BJ (cell line): ENCODE measurements at regions of chr6 and their contacts with region 1.

Region 1: DNA sequence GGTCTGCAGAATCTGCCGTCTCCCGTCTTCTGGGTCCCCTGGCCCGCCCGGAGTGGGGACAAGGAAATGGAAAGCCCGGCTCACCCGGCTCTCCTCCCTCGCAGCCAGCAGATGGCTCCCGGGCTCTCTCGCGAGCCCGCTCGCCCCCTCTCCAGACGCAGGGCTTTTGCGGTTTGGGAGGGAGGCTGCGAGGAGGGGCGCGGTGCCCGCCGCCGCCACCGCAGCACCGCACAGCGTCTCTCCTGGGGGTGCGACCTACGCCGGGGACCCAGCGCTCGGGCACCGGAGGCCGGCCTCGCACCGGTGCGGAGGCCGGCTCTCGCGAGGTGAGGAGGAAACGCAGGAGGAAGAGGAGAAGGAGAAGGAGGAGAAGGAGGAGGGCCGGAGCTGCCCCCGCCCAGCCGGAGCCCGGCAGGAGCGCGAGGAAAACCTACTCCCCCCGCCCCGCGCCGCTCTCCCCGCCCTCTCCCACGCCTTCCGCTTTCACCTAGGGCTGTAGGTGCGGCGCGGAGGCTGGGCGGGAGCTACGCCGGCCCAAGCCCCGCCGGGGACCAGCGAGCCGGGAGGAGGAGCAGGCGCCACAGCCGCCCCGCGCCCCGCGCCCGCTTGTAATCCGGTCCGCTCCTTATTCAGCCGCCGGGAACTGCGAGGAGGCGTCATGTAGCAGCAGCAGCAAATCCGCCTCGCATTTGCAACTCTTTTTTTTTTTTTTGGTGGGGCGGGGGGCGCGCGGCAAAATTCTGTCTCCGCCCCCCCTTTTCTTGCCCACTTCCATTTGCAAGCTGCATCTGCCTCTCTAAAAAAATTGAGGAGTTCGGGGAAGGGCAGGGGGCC is at the start of gene CARMIL1:
- DNase-seq: no peak
- H3K4me3 ChIP-seq: peak within 1 kb of the TSS; percentile 63
- H3K27me3 ChIP-seq: no peaks in the 10 kb centered on the region
- CTCF ChIP-seq: peak; percentile 82
- polyA plus RNA-seq, gene CARMIL1: 3.7 and 6.0 TPM in 2 replicates

Region 2: DNA sequence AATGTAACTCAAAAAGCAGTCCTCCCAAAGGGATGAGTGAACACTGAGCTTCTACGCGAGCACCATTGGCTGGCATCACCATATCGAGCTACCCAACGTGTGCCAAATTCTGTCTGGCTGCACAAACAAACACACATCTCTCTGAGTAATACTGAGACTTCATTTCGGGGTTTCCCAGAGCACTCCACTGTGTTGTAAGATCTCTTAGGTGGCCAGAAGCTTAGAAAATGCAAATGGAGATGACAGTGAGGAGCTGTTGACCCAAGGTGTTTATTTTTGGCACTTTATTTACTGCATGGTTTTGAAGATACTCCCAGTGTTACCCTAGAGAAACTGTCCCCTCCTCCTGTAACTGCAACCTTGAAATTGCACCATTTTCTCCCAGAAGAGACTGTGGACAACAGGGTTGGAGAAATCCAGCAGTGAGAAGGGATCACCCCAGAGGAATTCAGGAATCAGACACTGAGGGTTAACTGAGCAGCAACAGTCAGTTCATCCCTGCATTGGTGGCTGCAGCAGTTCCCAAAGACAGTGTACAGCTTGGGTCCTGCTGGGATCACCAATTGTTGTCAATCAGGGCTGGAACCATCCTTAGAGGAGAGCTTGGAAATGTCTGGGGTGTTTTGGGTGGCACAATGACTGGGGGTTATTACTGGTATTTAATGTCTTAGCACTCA is 342.4 kb before region 1 on chr6:
- CTCF ChIA-PET with region 1: no interaction called
- POLR2A ChIA-PET with region 1: no interaction called
- DNase-seq: no peak
- H3K4me3 ChIP-seq: no peak overlapping the region
- H3K27me3 ChIP-seq: no peaks in the 10 kb centered on the region
- CTCF ChIP-seq: no peak

Region 3: DNA sequence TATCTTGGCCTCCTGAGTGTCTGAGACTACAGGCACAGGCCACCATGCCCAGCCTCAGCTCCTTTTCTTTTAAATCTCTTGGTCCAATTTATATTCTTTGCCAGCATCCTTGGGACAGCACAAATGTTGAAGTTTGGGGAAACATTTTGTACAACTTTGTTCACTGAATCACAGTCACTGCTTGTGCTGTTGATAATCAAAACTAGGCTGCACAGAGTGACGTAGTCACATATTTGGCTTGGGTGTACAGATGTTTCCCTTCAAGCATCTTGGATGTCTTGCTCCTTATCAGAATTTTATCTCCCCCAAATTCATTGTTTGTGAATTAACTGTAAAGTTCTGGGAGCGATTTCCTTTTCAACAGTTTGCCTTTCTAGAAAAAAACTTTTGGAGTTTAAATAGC is 17.9 kb after region 1 on chr6:
- CTCF ChIA-PET with region 1: interaction called, 10 read pairs
- POLR2A ChIA-PET with region 1: no interaction called
- DNase-seq: peak; percentile 17
- H3K4me3 ChIP-seq: no peak overlapping the region
- H3K27me3 ChIP-seq: no peaks in the 10 kb centered on the region
- CTCF ChIP-seq: no peak

Region 4: GRCh38 chr6:25426901-25427300 is 147.8 kb after region 1 on chr6:
- CTCF ChIA-PET with region 1: no interaction called
- POLR2A ChIA-PET with region 1: no interaction called
- DNase-seq: no peak
- H3K4me3 ChIP-seq: no peak overlapping the region
- H3K27me3 ChIP-seq: no peaks in the 10 kb centered on the region
- CTCF ChIP-seq: no peak

Region 5: GRCh38 chr6:25490018-25490801 is 211.1 kb after region 1 on chr6:
- CTCF ChIA-PET with region 1: interaction called, 116 read pairs
- POLR2A ChIA-PET with region 1: no interaction called
- DNase-seq: peak; percentile 29
- H3K4me3 ChIP-seq: no peak overlapping the region
- H3K27me3 ChIP-seq: no peaks in the 10 kb centered on the region
- CTCF ChIP-seq: peak; percentile 92

Region 6: GRCh38 chr6:25499615-25500235 is 220.6 kb after region 1 on chr6:
- CTCF ChIA-PET with region 1: interaction called, 11 read pairs
- POLR2A ChIA-PET with region 1: no interaction called
- DNase-seq: no peak
- H3K4me3 ChIP-seq: no peak overlapping the region
- H3K27me3 ChIP-seq: no peaks in the 10 kb centered on the region
- CTCF ChIP-seq: no peak

Region 7: GRCh38 chr6:25556516-25556915 is 277.4 kb after region 1 on chr6:
- CTCF ChIA-PET with region 1: interaction called, 25 read pairs
- POLR2A ChIA-PET with region 1: no interaction called
- DNase-seq: peak; percentile 6
- H3K4me3 ChIP-seq: no peak overlapping the region
- H3K27me3 ChIP-seq: no peaks in the 10 kb centered on the region
- CTCF ChIP-seq: peak; percentile 84